ENCODE measurements at regions of chr15 and their contacts with region 1.

Region 1: GRCh38 chr15:56731548-56731947 is 1.8 kb downstream of the ZNF280D start:
- DNase-seq: no peak
- ATAC-seq: no peak
- H3K4me3 ChIP-seq: no peak overlapping the region
- H3K4me3 Mint-ChIP-seq: peak overlapping the region; percentile 92 to 96 (median 95)
- H3K27ac ChIP-seq: no peak overlapping the region
- H3K27ac Mint-ChIP-seq: peak overlapping the region in 1 of 2 donors; percentile 93
- H3K4me1 ChIP-seq: peaks cover 10 to 21% of the 10 kb centered on the region in 2 experiments
- H3K4me1 Mint-ChIP-seq: peaks cover 46 to 53% (median 51%) of the 10 kb centered on the region in 3 donors
- H3K27me3 ChIP-seq: no peaks in the 10 kb centered on the region
- H3K27me3 Mint-ChIP-seq: no peaks in the 10 kb centered on the region

Region 2: DNA sequence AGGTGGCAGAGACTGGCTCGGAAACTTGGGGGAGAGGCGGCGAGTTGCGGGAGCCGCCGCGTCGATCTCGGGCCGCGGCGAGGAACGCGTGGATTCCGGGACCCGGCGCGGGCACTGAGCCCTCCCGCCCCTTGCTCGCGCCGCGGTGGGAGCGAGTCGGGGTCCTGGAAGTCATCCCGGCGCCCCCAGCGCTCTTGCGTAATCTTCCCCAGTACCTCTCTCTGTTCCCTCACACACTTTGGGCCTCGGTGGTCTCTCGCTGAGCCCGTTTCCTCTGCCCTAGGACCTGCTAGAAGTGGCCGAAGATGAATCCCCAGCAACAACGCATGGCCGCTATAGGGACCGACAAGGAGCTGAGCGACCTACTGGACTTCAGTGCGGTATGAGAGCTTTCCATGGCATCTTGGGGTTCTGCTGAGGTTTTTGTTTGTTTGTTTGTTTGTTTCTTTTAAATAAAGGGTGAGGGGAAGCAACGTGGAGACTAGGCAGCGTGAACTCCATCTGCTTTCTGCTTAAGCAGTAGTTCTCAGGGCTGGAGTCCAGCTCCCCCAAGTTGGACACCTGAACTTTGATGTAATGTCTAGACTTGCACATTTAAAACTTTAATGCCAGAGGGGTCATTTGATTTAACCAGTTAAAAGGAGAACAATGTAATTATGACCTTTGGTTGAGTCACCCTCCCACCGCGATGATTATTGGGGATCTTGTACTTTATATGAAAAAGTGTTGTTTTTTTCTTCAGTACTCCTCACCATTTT is 188.2 kb after region 1 on chr15:
- CTCF ChIA-PET with region 1: no interaction called
- POLR2A ChIA-PET with region 1: interaction called in 1 of 2 experiments, 11 read pairs
- DNase-seq: peak in 11 of 35 experiments; percentile 0 to 28 (median 4)
- ATAC-seq: no peak
- H3K4me3 ChIP-seq: peak overlapping the region; percentile 80 to 97
- H3K4me3 Mint-ChIP-seq: peak overlapping the region; percentile 83 to 96 (median 85)
- H3K27ac ChIP-seq: peak overlapping the region; percentile 16
- H3K27ac Mint-ChIP-seq: peak overlapping the region; percentile 82 to 92
- H3K4me1 ChIP-seq: peaks cover 19 to 21% of the 10 kb centered on the region in 2 experiments
- H3K4me1 Mint-ChIP-seq: peaks cover 53 to 64% (median 62%) of the 10 kb centered on the region in 3 donors
- H3K27me3 ChIP-seq: no peaks in the 10 kb centered on the region
- H3K27me3 Mint-ChIP-seq: no peaks in the 10 kb centered on the region

Measured in T-cell (primary cell).